ENCODE measurements at regions of chr15 and their contacts with region 1.

Region 1: DNA sequence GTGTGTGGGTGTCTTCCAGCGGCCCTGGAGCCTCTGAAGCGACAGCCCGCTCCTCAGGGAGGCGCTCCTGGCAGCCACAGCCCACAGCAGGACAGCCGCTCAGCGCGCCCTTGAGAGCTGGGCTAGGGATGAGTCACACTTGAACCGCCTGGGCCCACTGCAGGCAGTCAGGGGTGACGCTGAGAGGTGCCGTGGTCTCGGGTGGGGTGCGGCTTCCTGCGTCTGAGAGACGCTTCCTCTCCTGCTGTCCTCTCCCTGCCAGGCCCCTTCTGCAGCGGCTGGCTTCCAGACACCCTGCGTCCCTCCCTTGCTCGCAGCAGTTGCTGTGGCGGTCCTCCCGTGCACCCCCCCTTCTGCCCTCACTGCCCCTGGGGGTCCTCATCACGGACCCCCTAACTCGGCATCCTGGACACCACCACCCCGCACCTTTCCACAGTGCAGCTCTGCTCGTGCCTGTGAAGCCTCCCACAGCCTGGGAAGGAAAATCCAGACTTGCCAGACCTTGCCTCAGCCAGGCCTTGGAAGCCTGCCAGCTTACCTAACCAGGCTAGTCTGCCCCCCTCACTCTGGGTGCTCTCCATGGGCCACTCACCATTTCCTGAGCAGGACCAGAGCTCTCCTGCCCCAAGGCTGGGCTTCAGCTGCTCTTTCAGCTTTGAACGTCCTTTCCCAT is 1.1 kb upstream of the SPTBN5 start:
- DNase-seq: peak; percentile 67 to 88 (median 80)
- ATAC-seq: peak; percentile 98
- H3K4me3 ChIP-seq: peak overlapping the region; percentile 27
- H3K4me3 Mint-ChIP-seq: peak overlapping the region; percentile 37 to 78 (median 70)
- H3K27ac ChIP-seq: peak overlapping the region; percentile 80
- H3K27ac Mint-ChIP-seq: peak overlapping the region; percentile 91 to 99 (median 97)
- H3K4me1 ChIP-seq: peaks cover 30 to 35% of the 10 kb centered on the region in 2 donors
- H3K4me1 Mint-ChIP-seq: peaks cover 14 to 46% (median 38%) of the 10 kb centered on the region in 7 donors
- H3K27me3 ChIP-seq: no peaks in the 10 kb centered on the region
- H3K27me3 Mint-ChIP-seq: no peaks in the 10 kb centered on the region

Region 2: GRCh38 chr15:41811432-41812195 is 83.3 kb before region 1 on chr15:
- CTCF ChIA-PET with region 1: interaction called, 13 read pairs
- POLR2A ChIA-PET with region 1: interaction called, 3 read pairs
- intact Hi-C with region 1: no loop called
- DNase-seq: peak; percentile 58 to 77 (median 72)
- ATAC-seq: peak; percentile 95
- H3K4me3 ChIP-seq: no peak overlapping the region
- H3K4me3 Mint-ChIP-seq: peak overlapping the region in 1 of 10 donors; percentile 30
- H3K27ac ChIP-seq: no peak overlapping the region
- H3K27ac Mint-ChIP-seq: peak overlapping the region in 1 of 9 donors; percentile 58
- H3K4me1 ChIP-seq: peaks cover 0 to 3% of the 10 kb centered on the region in 2 donors
- H3K4me1 Mint-ChIP-seq: peaks cover 8 to 28% (median 12%) of the 10 kb centered on the region in 7 donors
- H3K27me3 ChIP-seq: no peaks in the 10 kb centered on the region
- H3K27me3 Mint-ChIP-seq: no peaks in the 10 kb centered on the region

Region 3: DNA sequence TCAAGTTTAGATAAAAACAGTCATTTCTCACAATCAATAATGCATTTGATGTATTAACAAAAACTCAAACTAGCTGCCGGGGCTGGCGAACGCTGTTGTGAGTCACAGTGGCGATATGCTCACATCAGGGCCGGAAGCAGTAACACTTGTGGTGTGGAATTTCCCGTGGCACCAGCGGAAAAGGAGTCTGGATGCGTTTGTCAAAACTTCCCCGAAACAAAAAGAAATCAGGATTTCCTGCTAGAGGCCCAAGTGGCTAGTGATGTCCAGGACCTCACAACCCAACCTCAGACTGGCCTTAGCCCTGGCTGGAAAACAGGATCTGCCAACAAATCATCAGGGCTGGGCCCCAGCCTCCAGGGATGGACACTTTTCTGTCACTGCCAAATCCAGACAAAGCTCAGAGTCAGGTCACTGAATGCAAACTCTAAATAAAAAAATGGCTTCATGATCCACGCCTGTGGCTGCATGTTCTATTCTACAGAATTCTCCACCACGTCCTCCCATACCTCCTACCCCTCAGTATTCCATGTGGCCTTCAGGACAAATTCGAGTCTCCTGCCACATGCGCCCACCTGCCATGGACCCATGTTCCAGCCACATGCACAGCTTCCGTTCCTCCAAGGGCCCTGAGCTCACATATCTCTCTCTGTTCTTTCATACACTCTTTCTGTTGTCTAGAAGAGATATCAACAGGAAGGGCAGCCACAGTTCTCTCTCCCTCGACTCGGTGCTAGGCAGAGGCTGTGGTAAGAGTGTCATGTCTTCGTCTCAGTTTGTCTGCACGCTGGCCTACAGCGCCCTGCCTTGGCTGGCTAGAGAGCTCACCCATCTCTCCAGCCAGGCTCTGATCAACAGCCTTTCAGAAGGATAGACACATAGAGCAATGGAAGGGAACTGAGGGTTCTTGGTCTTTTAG is 42.0 kb after region 1 on chr15:
- CTCF ChIA-PET with region 1: interaction called, 7 read pairs
- POLR2A ChIA-PET with region 1: interaction called, 13 read pairs
- intact Hi-C with region 1: loop called (anchors 1 to 2 kb)
- DNase-seq: peak; percentile 39 to 85 (median 79)
- ATAC-seq: peak; percentile 86
- H3K4me3 ChIP-seq: peak overlapping the region; percentile 36
- H3K4me3 Mint-ChIP-seq: peak overlapping the region; percentile 63 to 89 (median 82)
- H3K27ac ChIP-seq: peak overlapping the region; percentile 83
- H3K27ac Mint-ChIP-seq: peak overlapping the region; percentile 93 to 100 (median 98)
- H3K4me1 ChIP-seq: peaks cover 50 to 53% of the 10 kb centered on the region in 2 donors
- H3K4me1 Mint-ChIP-seq: peaks cover 41 to 72% (median 65%) of the 10 kb centered on the region in 7 donors
- H3K27me3 ChIP-seq: no peaks in the 10 kb centered on the region
- H3K27me3 Mint-ChIP-seq: no peaks in the 10 kb centered on the region

Measured in naive thymus-derived CD4-positive, alpha-beta T cell (primary cell).